Mammary epithelial cell (primary cell): ENCODE measurements at regions of chr11 and their contacts with region 1.

Region 1: DNA sequence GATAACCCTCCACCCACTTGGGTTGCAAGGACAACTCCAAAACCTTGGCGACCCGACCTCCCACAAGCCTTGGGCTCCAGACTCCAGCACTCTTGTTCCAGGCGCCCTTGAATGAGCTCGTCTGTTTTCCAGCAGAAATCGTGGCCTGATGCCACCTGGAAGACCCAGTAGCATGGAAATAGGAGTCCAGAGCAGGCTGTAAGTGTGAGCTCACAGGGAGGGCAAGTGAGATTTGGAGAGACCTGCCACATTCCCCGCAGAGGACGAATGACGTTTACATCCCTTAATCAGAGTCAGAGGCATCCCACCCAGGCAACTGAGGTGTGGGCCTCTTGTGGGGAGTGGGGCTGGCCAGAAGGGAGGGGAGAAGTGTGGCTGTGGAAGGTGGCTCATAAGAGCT is 71.9 kb downstream of the LDLRAD3 start:
- DNase-seq: no peak
- H3K4me3 ChIP-seq: no peak overlapping the region
- H3K27ac ChIP-seq: no peak overlapping the region
- H3K4me1 ChIP-seq: peaks cover 55% of the 10 kb centered on the region
- H3K27me3 ChIP-seq: no peaks in the 10 kb centered on the region
- CTCF ChIP-seq: no peak

Region 2: GRCh38 chr11:35943713-35944655 is 71.8 kb before region 1 on chr11 and contains the start of gene LDLRAD3:
- CTCF ChIA-PET with region 1: no interaction called
- dilution Hi-C with region 1: loop called (anchors 5 kb)
- in situ Hi-C with region 1: no loop called
- intact Hi-C with region 1: loop called (anchors 2 kb)
- DNase-seq: peak; percentile 76
- H3K4me3 ChIP-seq: peak within 1 kb of the TSS; percentile 77 to 93 (median 81)
- H3K27ac ChIP-seq: peak within 1 kb of the TSS; percentile 52
- H3K4me1 ChIP-seq: peaks cover 17% of the 10 kb centered on the region
- H3K27me3 ChIP-seq: no peaks in the 10 kb centered on the region
- CTCF ChIP-seq: no peak
- total RNA-seq, gene LDLRAD3: 15.3 to 18.4 TPM

Region 3: DNA sequence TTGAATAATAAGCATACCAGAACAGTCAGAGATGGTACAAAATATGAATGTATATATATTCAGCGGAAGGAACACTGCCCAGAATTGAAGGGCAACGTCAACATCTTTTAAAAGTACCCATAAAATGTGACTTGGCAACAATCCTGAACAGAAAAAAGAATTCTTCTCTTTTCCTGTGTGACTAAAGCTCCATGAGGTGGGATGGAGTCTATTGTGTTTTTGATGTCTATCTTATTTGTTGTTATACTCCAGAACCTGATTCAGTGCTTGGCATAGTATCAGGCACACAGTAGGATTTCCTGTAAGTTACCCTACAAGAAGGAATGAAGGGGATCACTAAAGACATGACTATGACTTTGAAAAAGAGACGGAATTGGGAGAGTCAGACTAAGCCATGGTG is 61.6 kb before region 1 on chr11:
- CTCF ChIA-PET with region 1: no interaction called
- dilution Hi-C with region 1: no loop called
- in situ Hi-C with region 1: no loop called
- intact Hi-C with region 1: no loop called
- DNase-seq: no peak
- H3K4me3 ChIP-seq: no peak overlapping the region
- H3K27ac ChIP-seq: no peak overlapping the region
- H3K4me1 ChIP-seq: peaks cover 19% of the 10 kb centered on the region
- H3K27me3 ChIP-seq: no peaks in the 10 kb centered on the region
- CTCF ChIP-seq: no peak